Activated CD4-positive, alpha-beta T cell treated with anti-CD3 and anti-CD28 coated beads, Interleukin-2, amount 10 ng/mL, durations not matched to agents 24 days and 14 days (primary cell): ENCODE measurements at regions of chr1 and their contacts with region 1.

Region 1: GRCh38 chr1:64923294-64923721 is 43.0 kb downstream of the JAK1 start:
- DNase-seq: no peak
- H3K4me3 Mint-ChIP-seq: peak overlapping the region; percentile 43
- H3K27ac Mint-ChIP-seq: peak overlapping the region; percentile 83
- H3K4me1 Mint-ChIP-seq: peaks cover 62% of the 10 kb centered on the region
- H3K27me3 Mint-ChIP-seq: no peaks in the 10 kb centered on the region

Region 2: GRCh38 chr1:64898107-64898845 is 25.0 kb before region 1 on chr1:
- intact Hi-C with region 1: loop called (anchors 2 kb)
- DNase-seq: no peak
- H3K4me3 Mint-ChIP-seq: no peak overlapping the region
- H3K27ac Mint-ChIP-seq: no peak overlapping the region
- H3K4me1 Mint-ChIP-seq: peaks cover 54% of the 10 kb centered on the region
- H3K27me3 Mint-ChIP-seq: no peaks in the 10 kb centered on the region

Region 3: GRCh38 chr1:64912191-64912590 is 11.1 kb before region 1 on chr1:
- intact Hi-C with region 1: loop called (anchors 1 kb)
- DNase-seq: no peak
- H3K4me3 Mint-ChIP-seq: no peak overlapping the region
- H3K27ac Mint-ChIP-seq: peak overlapping the region; percentile 25
- H3K4me1 Mint-ChIP-seq: peaks cover 38% of the 10 kb centered on the region
- H3K27me3 Mint-ChIP-seq: no peaks in the 10 kb centered on the region

Region 4: GRCh38 chr1:64956733-64957441 is 33.6 kb after region 1 on chr1:
- intact Hi-C with region 1: loop called (anchors 2 kb)
- DNase-seq: peak; percentile 74
- H3K4me3 Mint-ChIP-seq: no peak overlapping the region
- H3K27ac Mint-ChIP-seq: no peak overlapping the region
- H3K4me1 Mint-ChIP-seq: peaks cover 44% of the 10 kb centered on the region
- H3K27me3 Mint-ChIP-seq: no peaks in the 10 kb centered on the region

Region 5: GRCh38 chr1:65002508-65003315 is 79.4 kb after region 1 on chr1:
- intact Hi-C with region 1: loop called (anchors 1 kb)
- DNase-seq: peak; percentile 90
- H3K4me3 Mint-ChIP-seq: peak overlapping the region; percentile 70
- H3K27ac Mint-ChIP-seq: peak overlapping the region; percentile 43
- H3K4me1 Mint-ChIP-seq: peaks cover 23% of the 10 kb centered on the region
- H3K27me3 Mint-ChIP-seq: peaks cover 33% of the 10 kb centered on the region

Region 6: DNA sequence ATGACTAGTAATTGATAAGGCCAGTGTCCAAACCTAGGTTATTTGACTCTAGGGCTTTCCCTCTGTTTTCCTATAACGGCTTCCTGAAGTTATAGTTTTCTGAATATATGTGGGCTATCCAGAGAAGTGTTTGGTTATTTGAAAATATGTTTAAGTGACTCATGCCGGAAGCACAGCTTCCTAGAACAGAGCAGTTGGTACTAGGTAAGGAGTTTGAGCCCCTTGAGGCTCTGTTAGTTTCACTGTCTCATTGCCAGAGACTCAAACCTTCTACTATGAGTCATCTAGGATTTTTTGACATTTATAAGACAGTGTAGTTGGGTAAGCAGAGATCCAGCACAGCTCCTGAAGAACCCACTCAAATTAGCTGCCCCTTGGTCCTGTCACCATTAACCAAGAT is 470.0 kb after region 1 on chr1:
- intact Hi-C with region 1: loop called (anchors 10 kb)
- DNase-seq: peak; percentile 81
- H3K4me3 Mint-ChIP-seq: peak overlapping the region; percentile 38
- H3K27ac Mint-ChIP-seq: peak overlapping the region; percentile 54
- H3K4me1 Mint-ChIP-seq: peaks cover 72% of the 10 kb centered on the region
- H3K27me3 Mint-ChIP-seq: no peaks in the 10 kb centered on the region